CD4-positive, alpha-beta T cell (primary cell): ENCODE measurements at regions of chr7 and their contacts with region 1.

Region 1: DNA sequence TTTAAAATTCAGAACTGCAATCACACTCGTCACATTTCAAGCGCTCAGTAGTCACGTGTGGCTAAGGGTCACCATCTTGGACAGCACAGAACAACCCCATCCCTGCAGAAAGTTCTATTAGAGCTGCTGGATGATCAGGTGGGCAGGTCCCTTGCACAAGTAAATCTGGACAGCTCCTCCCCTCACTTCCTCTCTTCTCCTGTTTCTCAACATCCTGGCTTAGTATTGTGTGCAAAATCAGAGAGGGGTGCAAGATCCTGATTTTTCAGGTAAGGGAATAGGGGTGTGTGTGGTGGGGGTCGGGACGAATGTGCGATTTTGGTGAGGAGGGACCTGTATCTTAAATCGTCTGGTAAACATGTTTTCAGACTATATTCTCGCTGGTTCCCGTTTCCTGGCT is at the start of gene GIMAP4:
- DNase-seq: peak in 10 of 14 experiments; percentile 27 to 71 (median 46)
- ATAC-seq: peak; percentile 45
- H3K4me3 ChIP-seq: peak within 1 kb of the TSS; percentile 72
- H3K4me3 Mint-ChIP-seq: peak within 1 kb of the TSS; percentile 98
- H3K27ac ChIP-seq: peak within 1 kb of the TSS; percentile 60 to 81
- H3K27ac Mint-ChIP-seq: peak within 1 kb of the TSS; percentile 88
- H3K4me1 ChIP-seq: peaks cover 68% of the 10 kb centered on the region
- H3K4me1 Mint-ChIP-seq: peaks cover 84% of the 10 kb centered on the region
- H3K27me3 ChIP-seq: no peaks in the 10 kb centered on the region
- H3K27me3 Mint-ChIP-seq: no peaks in the 10 kb centered on the region
- CTCF ChIP-seq: no peak
- total RNA-seq, gene GIMAP4: 20.7 to 23.6 TPM

Region 2: GRCh38 chr7:150481186-150481920 is 85.8 kb before region 1 on chr7:
- CTCF ChIA-PET with region 1: interaction called, 4 read pairs
- POLR2A ChIA-PET with region 1: interaction called, 29 read pairs
- intact Hi-C with region 1: no loop called
- DNase-seq: peak; percentile 36 to 90 (median 58)
- ATAC-seq: peak; percentile 59
- H3K4me3 ChIP-seq: peak overlapping the region; percentile 20
- H3K4me3 Mint-ChIP-seq: peak overlapping the region; percentile 84
- H3K27ac ChIP-seq: peak overlapping the region; percentile 92 to 95
- H3K27ac Mint-ChIP-seq: peak overlapping the region; percentile 97
- H3K4me1 ChIP-seq: peaks cover 76% of the 10 kb centered on the region
- H3K4me1 Mint-ChIP-seq: peaks cover 95% of the 10 kb centered on the region
- H3K27me3 ChIP-seq: no peaks in the 10 kb centered on the region
- H3K27me3 Mint-ChIP-seq: no peaks in the 10 kb centered on the region
- CTCF ChIP-seq: no peak

Region 3: DNA sequence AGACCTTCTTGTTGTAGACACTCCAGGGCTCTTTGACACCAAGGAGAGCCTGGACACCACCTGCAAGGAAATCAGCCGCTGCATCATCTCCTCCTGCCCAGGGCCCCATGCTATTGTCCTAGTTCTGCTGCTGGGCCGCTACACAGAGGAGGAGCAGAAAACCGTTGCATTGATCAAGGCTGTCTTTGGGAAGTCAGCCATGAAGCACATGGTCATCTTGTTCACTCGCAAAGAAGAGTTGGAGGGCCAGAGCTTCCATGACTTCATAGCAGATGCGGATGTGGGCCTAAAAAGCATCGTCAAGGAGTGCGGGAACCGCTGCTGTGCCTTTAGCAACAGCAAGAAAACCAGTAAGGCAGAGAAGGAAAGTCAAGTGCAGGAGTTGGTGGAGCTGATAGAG is 47.0 kb before region 1 on chr7:
- CTCF ChIA-PET with region 1: interaction called, 7 read pairs
- POLR2A ChIA-PET with region 1: interaction called, 164 read pairs
- intact Hi-C with region 1: loop called (anchors 2 kb)
- DNase-seq: peak in 9 of 14 experiments; percentile 23 to 59 (median 47)
- ATAC-seq: peak; percentile 33
- H3K4me3 ChIP-seq: peak overlapping the region; percentile 79
- H3K4me3 Mint-ChIP-seq: peak overlapping the region; percentile 100
- H3K27ac ChIP-seq: peak overlapping the region; percentile 59 to 60
- H3K27ac Mint-ChIP-seq: peak overlapping the region; percentile 93
- H3K4me1 ChIP-seq: peaks cover 12% of the 10 kb centered on the region
- H3K4me1 Mint-ChIP-seq: peaks cover 36% of the 10 kb centered on the region
- H3K27me3 ChIP-seq: no peaks in the 10 kb centered on the region
- H3K27me3 Mint-ChIP-seq: no peaks in the 10 kb centered on the region
- CTCF ChIP-seq: no peak

Region 4: GRCh38 chr7:150595361-150595760 is 28.2 kb after region 1 on chr7:
- CTCF ChIA-PET with region 1: no interaction called
- POLR2A ChIA-PET with region 1: no interaction called
- intact Hi-C with region 1: no loop called
- DNase-seq: no peak
- ATAC-seq: no peak
- H3K4me3 ChIP-seq: no peak overlapping the region
- H3K4me3 Mint-ChIP-seq: peak overlapping the region; percentile 2
- H3K27ac ChIP-seq: no peak overlapping the region
- H3K27ac Mint-ChIP-seq: no peak overlapping the region
- H3K4me1 ChIP-seq: peaks cover 18% of the 10 kb centered on the region
- H3K4me1 Mint-ChIP-seq: peaks cover 50% of the 10 kb centered on the region
- H3K27me3 ChIP-seq: no peaks in the 10 kb centered on the region
- H3K27me3 Mint-ChIP-seq: no peaks in the 10 kb centered on the region
- CTCF ChIP-seq: no peak

Region 5: GRCh38 chr7:150620617-150621371 is 53.6 kb after region 1 on chr7:
- CTCF ChIA-PET with region 1: no interaction called
- POLR2A ChIA-PET with region 1: interaction called, 13 read pairs
- intact Hi-C with region 1: no loop called
- DNase-seq: peak in 1 of 14 experiments; percentile 14
- ATAC-seq: no peak
- H3K4me3 ChIP-seq: no peak overlapping the region
- H3K4me3 Mint-ChIP-seq: peak overlapping the region; percentile 57
- H3K27ac ChIP-seq: peak overlapping the region in 1 of 2 donors; percentile 38
- H3K27ac Mint-ChIP-seq: peak overlapping the region; percentile 85
- H3K4me1 ChIP-seq: peaks cover 12% of the 10 kb centered on the region
- H3K4me1 Mint-ChIP-seq: peaks cover 79% of the 10 kb centered on the region
- H3K27me3 ChIP-seq: no peaks in the 10 kb centered on the region
- H3K27me3 Mint-ChIP-seq: no peaks in the 10 kb centered on the region
- CTCF ChIP-seq: no peak

Region 6: DNA sequence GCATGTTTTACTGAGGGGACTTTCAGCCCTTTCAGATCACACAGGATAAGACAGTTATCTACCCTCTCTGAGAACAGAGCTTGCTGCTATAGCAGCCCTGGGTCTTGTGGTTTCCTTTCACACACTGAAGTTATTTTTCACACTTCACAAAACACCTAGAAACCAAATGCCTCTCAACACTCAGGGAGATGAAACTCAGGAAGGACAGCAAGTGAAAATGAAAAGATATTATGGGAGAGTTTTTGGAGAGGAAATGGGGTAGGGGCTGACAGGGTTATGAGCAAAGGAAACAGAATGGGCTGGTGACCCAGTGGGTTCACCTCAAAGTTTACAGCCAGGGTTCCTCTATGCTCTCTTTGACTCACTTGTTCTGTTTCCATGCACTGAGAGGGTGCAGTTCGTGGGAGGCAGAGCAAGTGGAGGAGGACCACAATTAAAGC is 101.3 kb after region 1 on chr7:
- CTCF ChIA-PET with region 1: interaction called, 3 read pairs
- POLR2A ChIA-PET with region 1: interaction called, 40 read pairs
- intact Hi-C with region 1: no loop called
- DNase-seq: peak in 13 of 14 experiments; percentile 34 to 92 (median 51)
- ATAC-seq: peak; percentile 82
- H3K4me3 ChIP-seq: peak overlapping the region; percentile 4
- H3K4me3 Mint-ChIP-seq: peak overlapping the region; percentile 49
- H3K27ac ChIP-seq: peak overlapping the region; percentile 73 to 85
- H3K27ac Mint-ChIP-seq: peak overlapping the region; percentile 91
- H3K4me1 ChIP-seq: peaks cover 70% of the 10 kb centered on the region
- H3K4me1 Mint-ChIP-seq: peaks cover 94% of the 10 kb centered on the region
- H3K27me3 ChIP-seq: no peaks in the 10 kb centered on the region
- H3K27me3 Mint-ChIP-seq: no peaks in the 10 kb centered on the region
- CTCF ChIP-seq: no peak

Region 7: GRCh38 chr7:150685219-150686029 is 118.3 kb after region 1 on chr7 and contains the start of gene GIMAP2:
- CTCF ChIA-PET with region 1: interaction called, 5 read pairs
- POLR2A ChIA-PET with region 1: interaction called, 63 read pairs
- intact Hi-C with region 1: loop called in 1 of 2 experiments (anchors 5 kb)
- DNase-seq: peak in 9 of 14 experiments; percentile 22 to 81 (median 48)
- ATAC-seq: peak; percentile 86
- H3K4me3 ChIP-seq: peak within 1 kb of the TSS; percentile 80
- H3K4me3 Mint-ChIP-seq: peak within 1 kb of the TSS; percentile 100
- H3K27ac ChIP-seq: peak within 1 kb of the TSS; percentile 78 to 95
- H3K27ac Mint-ChIP-seq: peak within 1 kb of the TSS; percentile 100
- H3K4me1 ChIP-seq: peaks cover 44% of the 10 kb centered on the region
- H3K4me1 Mint-ChIP-seq: peaks cover 85% of the 10 kb centered on the region
- H3K27me3 ChIP-seq: no peaks in the 10 kb centered on the region
- H3K27me3 Mint-ChIP-seq: no peaks in the 10 kb centered on the region
- CTCF ChIP-seq: no peak
- total RNA-seq, gene GIMAP2: 64.1 to 65.1 TPM

Region 8: GRCh38 chr7:150737265-150738055 is 170.3 kb after region 1 on chr7 and contains the start of gene GIMAP5:
- CTCF ChIA-PET with region 1: interaction called, 6 read pairs
- POLR2A ChIA-PET with region 1: interaction called, 67 read pairs
- intact Hi-C with region 1: loop called (anchors 1 to 5 kb)
- DNase-seq: peak in 12 of 14 experiments; percentile 29 to 78 (median 70)
- ATAC-seq: peak; percentile 75
- H3K4me3 ChIP-seq: peak within 1 kb of the TSS; percentile 65
- H3K4me3 Mint-ChIP-seq: peak within 1 kb of the TSS; percentile 96
- H3K27ac ChIP-seq: peak within 1 kb of the TSS; percentile 80 to 87
- H3K27ac Mint-ChIP-seq: peak within 1 kb of the TSS; percentile 87
- H3K4me1 ChIP-seq: peaks cover 59% of the 10 kb centered on the region
- H3K4me1 Mint-ChIP-seq: peaks cover 74% of the 10 kb centered on the region
- H3K27me3 ChIP-seq: no peaks in the 10 kb centered on the region
- H3K27me3 Mint-ChIP-seq: no peaks in the 10 kb centered on the region
- CTCF ChIP-seq: no peak
- total RNA-seq, gene GIMAP5: 31.3 to 35.2 TPM

Region 9: GRCh38 chr7:151174246-151175046 is 607.3 kb after region 1 on chr7:
- CTCF ChIA-PET with region 1: no interaction called
- POLR2A ChIA-PET with region 1: no interaction called
- intact Hi-C with region 1: no loop called
- DNase-seq: peak in 6 of 14 experiments; percentile 11 to 71 (median 30)
- ATAC-seq: no peak
- H3K4me3 ChIP-seq: no peak overlapping the region
- H3K4me3 Mint-ChIP-seq: no peak overlapping the region
- H3K27ac ChIP-seq: no peak overlapping the region
- H3K27ac Mint-ChIP-seq: no peak overlapping the region
- H3K4me1 ChIP-seq: peaks cover 15% of the 10 kb centered on the region
- H3K4me1 Mint-ChIP-seq: no peaks in the 10 kb centered on the region
- H3K27me3 ChIP-seq: peaks cover 5 to 6% of the 10 kb centered on the region in 2 experiments
- H3K27me3 Mint-ChIP-seq: peaks cover 54% of the 10 kb centered on the region
- CTCF ChIP-seq: no peak

Region 10: DNA sequence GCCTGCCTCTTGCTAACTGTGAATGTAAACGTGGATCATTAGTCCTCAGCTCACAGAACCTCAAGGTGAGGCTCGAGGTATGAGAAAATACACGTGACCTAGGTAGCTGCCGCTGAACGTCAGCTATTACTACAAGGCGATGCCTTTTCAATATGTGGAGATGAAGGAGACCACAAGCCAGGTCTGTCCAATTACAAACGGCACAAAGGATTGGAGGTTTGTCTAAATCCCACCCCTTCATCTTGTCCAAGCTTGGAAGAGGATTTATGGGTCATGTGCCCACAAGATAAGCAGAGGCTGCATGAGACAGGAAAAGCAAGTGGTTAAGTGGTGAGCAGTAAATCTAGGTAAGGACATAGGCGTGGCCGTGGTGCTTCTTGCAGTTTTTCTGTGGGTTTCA is 639.7 kb after region 1 on chr7:
- CTCF ChIA-PET with region 1: no interaction called
- POLR2A ChIA-PET with region 1: no interaction called
- intact Hi-C with region 1: no loop called
- DNase-seq: peak in 5 of 14 experiments; percentile 19 to 84 (median 71)
- ATAC-seq: peak; percentile 83
- H3K4me3 ChIP-seq: no peak overlapping the region
- H3K4me3 Mint-ChIP-seq: peak overlapping the region; percentile 45
- H3K27ac ChIP-seq: peak overlapping the region in 1 of 2 donors; percentile 70
- H3K27ac Mint-ChIP-seq: peak overlapping the region; percentile 71
- H3K4me1 ChIP-seq: peaks cover 58% of the 10 kb centered on the region
- H3K4me1 Mint-ChIP-seq: peaks cover 28% of the 10 kb centered on the region
- H3K27me3 ChIP-seq: no peaks in the 10 kb centered on the region
- H3K27me3 Mint-ChIP-seq: no peaks in the 10 kb centered on the region
- CTCF ChIP-seq: no peak